Activated CD8-positive, alpha-beta T cell treated with anti-CD3 and anti-CD28 coated beads, Interleukin-2, amount 10 ng/mL, durations not matched to agents 7 days and 5 days (primary cell): ENCODE measurements at regions of chr17 and their contacts with region 1.

Region 1: GRCh38 chr17:7035591-7036368 is at the start of gene SLC16A13:
- DNase-seq: peak; percentile 100
- ATAC-seq: peak; percentile 93
- H3K4me3 Mint-ChIP-seq: peak within 1 kb of the TSS; percentile 95
- H3K27ac Mint-ChIP-seq: peak within 1 kb of the TSS; percentile 98
- H3K4me1 Mint-ChIP-seq: peaks cover 62% of the 10 kb centered on the region
- H3K27me3 Mint-ChIP-seq: no peaks in the 10 kb centered on the region
- total RNA-seq, gene SLC16A13: 14.8 to 15.0 TPM

Region 2: GRCh38 chr17:7014261-7014994 is 21.4 kb before region 1 on chr17:
- CTCF ChIA-PET with region 1: interaction called, 59 read pairs
- POLR2A ChIA-PET with region 1: interaction called, 31 read pairs
- DNase-seq: peak; percentile 98
- ATAC-seq: peak; percentile 89
- H3K4me3 Mint-ChIP-seq: peak overlapping the region; percentile 87
- H3K27ac Mint-ChIP-seq: peak overlapping the region; percentile 99
- H3K4me1 Mint-ChIP-seq: peaks cover 74% of the 10 kb centered on the region
- H3K27me3 Mint-ChIP-seq: no peaks in the 10 kb centered on the region

Region 3: DNA sequence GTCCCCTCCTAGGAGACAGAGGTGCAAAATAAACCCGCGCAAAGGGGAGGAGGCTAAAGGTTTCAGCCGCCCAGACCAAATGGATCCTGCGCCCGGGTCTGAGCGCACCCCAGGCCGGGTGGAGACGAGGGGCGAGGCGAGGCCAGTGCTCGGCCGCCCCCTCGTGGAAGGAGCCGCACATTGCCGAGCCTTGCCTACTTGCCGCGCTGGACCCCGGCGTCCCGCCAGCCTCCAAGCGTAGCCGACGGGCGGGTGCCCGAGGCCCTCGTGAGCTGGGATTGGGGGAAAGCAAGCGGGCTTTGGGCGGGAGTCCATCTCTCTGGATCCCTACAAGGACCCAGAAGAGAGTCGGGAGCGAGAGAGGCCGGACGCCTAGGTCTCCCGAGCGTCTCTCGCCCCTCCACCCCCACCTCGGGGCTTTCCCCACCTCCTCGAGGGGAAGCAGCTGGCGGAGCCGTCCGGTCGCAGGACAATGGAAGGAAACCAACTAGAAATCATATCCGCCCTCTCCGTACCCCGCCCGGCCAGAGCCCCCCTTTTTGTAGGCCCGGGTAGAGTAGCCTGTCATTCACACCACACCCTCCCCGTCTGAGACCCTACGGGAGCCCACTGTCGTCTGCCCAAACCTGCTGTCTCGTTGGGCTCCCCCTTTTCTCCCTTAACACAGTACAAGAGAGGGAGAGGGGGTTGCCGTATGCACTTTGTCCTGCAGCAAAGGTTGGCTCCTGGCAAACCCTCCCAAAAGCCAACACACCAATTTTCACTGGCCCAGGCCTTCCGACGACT is 13.6 kb before region 1 on chr17:
- CTCF ChIA-PET with region 1: interaction called, 59 read pairs
- POLR2A ChIA-PET with region 1: interaction called, 61 read pairs
- DNase-seq: peak; percentile 86
- ATAC-seq: peak; percentile 74
- H3K4me3 Mint-ChIP-seq: peak overlapping the region; percentile 8
- H3K27ac Mint-ChIP-seq: peak overlapping the region; percentile 55
- H3K4me1 Mint-ChIP-seq: peaks cover 73% of the 10 kb centered on the region
- H3K27me3 Mint-ChIP-seq: peaks cover 2% of the 10 kb centered on the region